Activated naive CD4-positive, alpha-beta T cell treated with anti-CD3 and anti-CD28 coated beads, Interleukin-2, amount 10 ng/mL, durations not matched to agents 7 days and 5 days (primary cell): ENCODE measurements at regions of chr1 and their contacts with region 1.

Region 1: DNA sequence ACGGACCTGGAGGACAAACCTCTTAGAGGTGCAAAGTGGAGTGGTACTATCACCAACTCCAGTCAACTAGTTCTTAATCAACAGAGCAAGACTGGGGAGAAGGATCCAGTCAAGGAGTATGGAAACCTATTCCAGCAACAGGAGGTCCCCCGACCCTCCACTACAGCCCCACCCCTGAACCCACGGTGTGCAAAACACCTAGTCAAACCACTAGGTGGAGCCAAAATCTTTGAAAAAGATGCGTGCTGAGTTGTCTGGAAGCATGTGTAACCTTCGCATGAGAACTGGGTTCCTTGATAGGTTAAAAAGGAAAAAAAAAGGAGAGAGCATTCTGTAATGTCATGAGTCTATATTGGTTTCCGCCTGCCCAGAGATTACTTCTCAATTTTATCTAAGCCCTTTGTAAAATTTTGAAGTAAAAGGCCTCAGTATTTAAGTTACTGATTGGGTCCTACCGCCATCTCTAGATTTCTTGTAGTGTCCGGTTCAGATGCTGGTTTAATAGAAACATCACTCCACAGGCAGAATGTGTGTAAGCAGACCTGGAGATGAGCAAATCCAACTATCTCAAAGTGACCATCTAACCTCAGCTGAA is 81.9 kb upstream of the HAO2 start:
- DNase-seq: peak; percentile 39
- H3K4me3 Mint-ChIP-seq: no peak overlapping the region
- H3K27ac Mint-ChIP-seq: no peak overlapping the region
- H3K4me1 Mint-ChIP-seq: no peaks in the 10 kb centered on the region
- H3K27me3 Mint-ChIP-seq: peaks cover 10% of the 10 kb centered on the region

Region 2: DNA sequence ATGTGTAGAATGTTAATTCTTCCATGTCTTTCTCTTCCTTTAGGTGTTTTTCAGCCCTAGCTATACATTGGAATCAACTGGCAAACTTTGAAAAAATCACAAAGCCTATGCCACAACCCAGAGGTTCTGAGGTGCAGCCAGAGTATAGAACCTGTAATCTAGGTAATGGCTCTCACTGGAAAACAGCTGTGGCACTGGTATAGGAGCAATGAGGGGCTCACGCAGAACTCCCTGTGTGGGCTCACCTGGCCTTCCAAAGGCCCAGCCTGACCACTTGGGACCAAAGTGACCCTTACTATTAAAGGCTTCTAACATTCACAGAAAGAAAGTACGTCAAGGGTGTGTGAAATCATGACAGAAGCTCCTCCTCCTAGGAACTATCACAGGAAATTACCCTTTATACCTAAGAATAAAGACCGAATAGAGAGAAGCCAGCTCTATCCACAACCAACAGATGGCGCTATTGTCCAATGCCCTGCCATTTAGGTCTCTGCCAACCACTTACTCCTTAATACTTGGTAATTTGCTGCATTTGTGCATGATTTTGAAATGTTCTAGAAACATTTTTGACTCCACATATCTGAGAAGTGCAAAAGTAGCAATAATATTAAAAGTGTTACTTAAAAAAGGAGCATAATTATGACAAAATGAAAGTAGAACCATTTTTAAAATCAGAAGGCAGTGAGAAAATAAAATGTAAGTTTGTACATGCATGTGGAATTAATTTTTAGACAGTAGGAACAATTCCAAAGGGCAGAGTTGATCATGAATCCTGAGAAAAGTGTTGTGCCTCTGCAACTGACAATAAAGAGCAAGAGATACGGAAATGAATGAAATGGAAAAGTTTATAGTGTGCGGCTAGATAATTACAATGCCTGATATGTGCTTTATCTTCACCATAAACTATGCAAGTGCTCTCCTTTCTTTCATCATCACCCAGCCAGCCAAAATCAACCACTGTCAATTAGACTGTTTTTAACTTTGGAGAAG is 11.2 kb before region 1 on chr1:
- CTCF ChIA-PET with region 1: interaction called, 12 read pairs
- DNase-seq: peak; percentile 63
- H3K4me3 Mint-ChIP-seq: no peak overlapping the region
- H3K27ac Mint-ChIP-seq: no peak overlapping the region
- H3K4me1 Mint-ChIP-seq: no peaks in the 10 kb centered on the region
- H3K27me3 Mint-ChIP-seq: peaks cover 7% of the 10 kb centered on the region

Region 3: GRCh38 chr1:119384591-119384990 is 97.9 kb after region 1 on chr1:
- CTCF ChIA-PET with region 1: no interaction called
- DNase-seq: no peak
- H3K4me3 Mint-ChIP-seq: no peak overlapping the region
- H3K27ac Mint-ChIP-seq: no peak overlapping the region
- H3K4me1 Mint-ChIP-seq: no peaks in the 10 kb centered on the region
- H3K27me3 Mint-ChIP-seq: no peaks in the 10 kb centered on the region